A549 (cell line): ENCODE measurements at regions of chr10 and their contacts with region 1.

Region 1: DNA sequence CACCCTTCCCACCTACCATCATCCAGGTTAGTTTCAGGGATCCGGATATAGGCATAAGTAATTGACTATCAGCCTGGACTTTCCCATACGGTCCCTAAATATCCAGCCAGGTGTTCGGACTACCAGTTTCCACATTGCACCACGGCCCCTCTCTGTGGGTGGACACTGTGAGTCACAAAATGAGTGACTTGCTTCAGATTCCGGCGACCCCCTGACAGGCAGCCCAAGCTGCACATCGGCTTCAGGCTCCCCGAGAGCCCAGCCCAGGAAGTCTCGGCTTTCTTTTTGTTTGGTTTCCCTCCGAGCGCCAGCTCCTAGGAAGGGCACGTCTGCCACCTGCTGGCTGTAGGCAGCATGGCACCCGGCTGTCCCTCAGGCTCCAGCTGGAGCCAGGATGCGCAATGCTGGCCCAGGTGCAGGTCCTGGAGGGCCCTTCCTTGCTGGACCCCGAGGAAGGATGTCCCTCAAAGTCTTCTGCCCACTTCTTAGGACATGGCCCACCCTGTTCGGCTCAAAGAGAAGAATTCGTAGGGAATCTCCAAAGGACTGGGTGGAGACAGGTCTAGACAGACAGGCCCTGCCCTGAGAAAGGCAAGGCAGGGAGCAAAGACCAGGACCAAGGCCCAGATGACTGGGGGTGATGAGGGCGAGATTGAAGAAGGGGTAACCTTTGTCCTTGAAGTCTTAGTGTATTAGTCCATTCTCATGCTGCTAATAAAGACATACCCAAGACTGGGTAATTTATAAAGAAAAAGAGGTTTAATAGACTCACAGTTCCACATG is 10.6 kb downstream of the HABP2 start:
- DNase-seq: peak; percentile 65 to 83
- ATAC-seq: peak; percentile 96 to 97
- H3K4me3 ChIP-seq: peak overlapping the region; percentile 30
- H3K27ac ChIP-seq: peak overlapping the region; percentile 9 to 70; a peak in 4 of 6 replicates
- H3K4me1 ChIP-seq: no peaks in the 10 kb centered on the region
- CTCF ChIP-seq: peak; percentile 92
- EP300 ChIP-seq: no peak
- POLR2A ChIP-seq: no peak
- RAD21 ChIP-seq: peak; percentile 89 to 93

Region 2: GRCh38 chr10:113552701-113553100 is 10.8 kb before region 1 on chr10 and contains the start of gene HABP2:
- CTCF ChIA-PET with region 1: interaction called, 25 read pairs
- POLR2A ChIA-PET with region 1: no interaction called
- DNase-seq: peak in 1 of 2 experiments; percentile 24
- ATAC-seq: peak; percentile 32 to 39; a peak in 1 of 6 replicates
- H3K4me3 ChIP-seq: no peak within 1 kb of the TSS
- H3K27ac ChIP-seq: peak within 1 kb of the TSS in 1 of 2 experiments; percentile 26; a peak in 2 of 6 replicates
- H3K4me1 ChIP-seq: peaks cover 22% of the 10 kb centered on the region
- CTCF ChIP-seq: no peak
- EP300 ChIP-seq: no peak
- POLR2A ChIP-seq: no peak
- RAD21 ChIP-seq: no peak
- polyA plus RNA-seq, gene HABP2: 0.97 and 1.1 TPM in 2 replicates